Mammary epithelial cell (primary cell): ENCODE measurements at regions of chr3 and their contacts with region 1.

Region 1: GRCh38 chr3:29280404-29281093 is at the start of gene RBMS3:
- DNase-seq: peak; percentile 91
- H3K4me3 ChIP-seq: peak within 1 kb of the TSS; percentile 59 to 76 (median 69)
- H3K27ac ChIP-seq: peak within 1 kb of the TSS; percentile 93
- H3K4me1 ChIP-seq: peaks cover 4% of the 10 kb centered on the region
- H3K27me3 ChIP-seq: no peaks in the 10 kb centered on the region
- CTCF ChIP-seq: peak; percentile 30 to 68
- total RNA-seq, gene RBMS3: 31.5 to 51.5 TPM

Region 2: DNA sequence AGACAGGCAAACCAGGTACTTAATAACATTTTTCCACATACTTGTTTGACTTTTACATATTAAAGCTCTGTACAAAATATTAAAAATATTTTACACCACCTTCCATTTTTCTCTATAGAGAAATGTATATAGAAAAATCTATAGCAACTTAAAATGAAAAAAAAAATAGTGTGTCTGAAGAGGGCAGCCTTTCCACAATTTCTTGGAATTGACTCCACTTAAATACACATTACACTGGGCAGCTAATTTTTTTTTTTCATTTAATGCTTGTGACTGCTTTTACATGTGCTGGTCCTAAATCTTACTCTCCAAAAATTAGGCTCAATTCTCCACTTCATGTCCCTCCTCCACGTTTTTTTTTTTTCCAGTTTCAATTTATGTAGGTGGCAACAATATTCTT is 426.7 kb before region 1 on chr3:
- CTCF ChIA-PET with region 1: no interaction called
- dilution Hi-C with region 1: no loop called
- in situ Hi-C with region 1: no loop called
- intact Hi-C with region 1: loop called (anchors 5 kb)
- DNase-seq: no peak
- H3K4me3 ChIP-seq: no peak overlapping the region
- H3K27ac ChIP-seq: no peak overlapping the region
- H3K4me1 ChIP-seq: peaks cover 4% of the 10 kb centered on the region
- H3K27me3 ChIP-seq: no peaks in the 10 kb centered on the region
- CTCF ChIP-seq: peak in 1 of 2 donors; percentile 23

Region 3: DNA sequence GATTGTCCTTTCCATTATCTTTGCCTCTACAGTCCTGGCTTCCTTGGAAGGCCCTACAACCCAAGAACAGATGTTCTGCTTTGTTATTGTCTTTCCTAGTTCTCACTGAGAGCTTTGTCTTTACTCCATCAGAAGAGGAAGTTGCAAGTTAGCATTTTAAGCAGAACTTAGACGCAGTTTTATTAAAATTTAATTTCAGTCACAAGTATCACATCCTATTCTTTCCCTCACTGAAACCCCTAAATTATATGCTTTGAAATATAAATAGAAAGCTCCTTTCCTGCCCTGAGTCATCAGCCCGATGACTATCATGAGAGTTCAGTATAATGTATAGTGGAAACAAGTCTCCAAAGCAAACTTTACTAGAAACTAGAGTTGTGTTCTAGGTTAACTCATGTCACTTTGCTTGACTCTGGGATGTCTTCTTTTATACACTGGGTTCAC is 290.9 kb before region 1 on chr3:
- CTCF ChIA-PET with region 1: no interaction called
- dilution Hi-C with region 1: no loop called
- in situ Hi-C with region 1: no loop called
- intact Hi-C with region 1: loop called (anchors 5 kb)
- DNase-seq: no peak
- H3K4me3 ChIP-seq: no peak overlapping the region
- H3K27ac ChIP-seq: no peak overlapping the region
- H3K4me1 ChIP-seq: peaks cover 13% of the 10 kb centered on the region
- H3K27me3 ChIP-seq: no peaks in the 10 kb centered on the region
- CTCF ChIP-seq: no peak

Region 4: GRCh38 chr3:29144807-29145206 is 135.7 kb before region 1 on chr3:
- CTCF ChIA-PET with region 1: no interaction called
- dilution Hi-C with region 1: no loop called
- in situ Hi-C with region 1: no loop called
- intact Hi-C with region 1: loop called (anchors 2 kb)
- DNase-seq: no peak
- H3K4me3 ChIP-seq: no peak overlapping the region
- H3K27ac ChIP-seq: no peak overlapping the region
- H3K4me1 ChIP-seq: no peaks in the 10 kb centered on the region
- H3K27me3 ChIP-seq: no peaks in the 10 kb centered on the region
- CTCF ChIP-seq: peak in 1 of 2 donors; percentile 8

Region 5: DNA sequence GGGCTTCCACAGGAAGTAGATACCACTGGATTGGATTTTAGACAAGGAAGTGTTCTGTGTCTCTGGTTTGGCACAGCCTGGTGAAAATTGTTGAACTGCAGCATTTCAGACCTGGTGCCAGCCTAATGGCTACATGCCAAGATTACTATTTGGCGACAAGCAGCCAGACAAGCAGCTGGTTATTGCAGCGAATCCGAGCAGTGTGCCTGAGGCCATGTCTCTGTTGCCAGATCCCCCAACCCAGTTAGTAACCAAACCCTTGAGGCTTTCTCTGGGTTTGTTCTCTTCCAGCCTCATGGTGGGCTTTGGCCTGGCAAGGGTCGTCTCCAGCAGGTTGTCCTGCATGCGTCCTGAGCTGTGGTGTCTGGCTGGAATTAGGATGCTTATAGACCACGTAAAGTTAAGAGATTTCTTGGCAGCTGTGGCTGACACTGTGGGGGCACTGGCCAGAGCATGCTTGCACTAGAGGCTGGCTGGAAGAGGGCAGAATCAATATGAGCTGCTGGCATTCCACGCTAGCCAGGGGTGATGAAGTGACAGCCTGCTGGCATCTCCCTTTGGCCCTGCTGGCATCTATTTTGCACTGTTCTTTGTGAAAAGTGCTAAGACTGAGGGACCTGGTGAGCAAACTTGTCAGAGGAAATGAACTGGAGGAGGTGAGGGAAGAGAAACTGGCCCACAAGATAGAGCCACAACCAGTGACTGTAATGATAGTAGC is 172.9 kb after region 1 on chr3:
- CTCF ChIA-PET with region 1: no interaction called
- dilution Hi-C with region 1: no loop called
- in situ Hi-C with region 1: loop called in 1 of 2 experiments (anchors 25 kb)
- intact Hi-C with region 1: loop called (anchors 5 kb)
- DNase-seq: peak; percentile 26
- H3K4me3 ChIP-seq: no peak overlapping the region
- H3K27ac ChIP-seq: peak overlapping the region; percentile 91
- H3K4me1 ChIP-seq: peaks cover 36% of the 10 kb centered on the region
- H3K27me3 ChIP-seq: no peaks in the 10 kb centered on the region
- CTCF ChIP-seq: no peak

Region 6: GRCh38 chr3:29759411-29760225 is 479.1 kb after region 1 on chr3:
- CTCF ChIA-PET with region 1: interaction called, 26 read pairs
- dilution Hi-C with region 1: no loop called
- in situ Hi-C with region 1: loop called (anchors 5 to 25 kb)
- intact Hi-C with region 1: loop called (anchors 1 kb)
- DNase-seq: peak; percentile 78
- H3K4me3 ChIP-seq: no peak overlapping the region
- H3K27ac ChIP-seq: peak overlapping the region; percentile 89
- H3K4me1 ChIP-seq: peaks cover 40% of the 10 kb centered on the region
- H3K27me3 ChIP-seq: no peaks in the 10 kb centered on the region
- CTCF ChIP-seq: no peak